ENCODE measurements at regions of chr7 and their contacts with region 1.

Region 1: GRCh38 chr7:37208528-37208927 is 240.1 kb downstream of the ELMO1 start:
- DNase-seq: peak; percentile 53
- ATAC-seq: peak; percentile 92
- H3K4me3 ChIP-seq: no peak overlapping the region
- H3K27ac ChIP-seq: no peak overlapping the region
- H3K4me1 ChIP-seq: no peaks in the 10 kb centered on the region
- H3K27me3 ChIP-seq: 0 out of 5 replicates have a peak, but pooled peaks cover 0 to 2% of the 10 kb centered on the region in 2 experiments
- CTCF ChIP-seq: peak; percentile 77
- EP300 ChIP-seq: no peak
- POLR2A ChIP-seq: no peak
- RAD21 ChIP-seq: peak; percentile 36; the same call in 1 of the 2 replicates

Region 2: GRCh38 chr7:37198041-37198905 is 10.3 kb before region 1 on chr7:
- CTCF ChIA-PET with region 1: no interaction called
- POLR2A ChIA-PET with region 1: no interaction called
- in situ Hi-C with region 1: no loop called
- intact Hi-C with region 1: no loop called
- DNase-seq: peak; percentile 49
- ATAC-seq: peak; percentile 60
- H3K4me3 ChIP-seq: no peak overlapping the region
- H3K27ac ChIP-seq: no peak overlapping the region
- H3K4me1 ChIP-seq: peaks cover 46% of the 10 kb centered on the region
- H3K27me3 ChIP-seq: no peaks in the 10 kb centered on the region
- CTCF ChIP-seq: no peak
- EP300 ChIP-seq: no peak
- POLR2A ChIP-seq: no peak
- RAD21 ChIP-seq: no peak

Region 3: DNA sequence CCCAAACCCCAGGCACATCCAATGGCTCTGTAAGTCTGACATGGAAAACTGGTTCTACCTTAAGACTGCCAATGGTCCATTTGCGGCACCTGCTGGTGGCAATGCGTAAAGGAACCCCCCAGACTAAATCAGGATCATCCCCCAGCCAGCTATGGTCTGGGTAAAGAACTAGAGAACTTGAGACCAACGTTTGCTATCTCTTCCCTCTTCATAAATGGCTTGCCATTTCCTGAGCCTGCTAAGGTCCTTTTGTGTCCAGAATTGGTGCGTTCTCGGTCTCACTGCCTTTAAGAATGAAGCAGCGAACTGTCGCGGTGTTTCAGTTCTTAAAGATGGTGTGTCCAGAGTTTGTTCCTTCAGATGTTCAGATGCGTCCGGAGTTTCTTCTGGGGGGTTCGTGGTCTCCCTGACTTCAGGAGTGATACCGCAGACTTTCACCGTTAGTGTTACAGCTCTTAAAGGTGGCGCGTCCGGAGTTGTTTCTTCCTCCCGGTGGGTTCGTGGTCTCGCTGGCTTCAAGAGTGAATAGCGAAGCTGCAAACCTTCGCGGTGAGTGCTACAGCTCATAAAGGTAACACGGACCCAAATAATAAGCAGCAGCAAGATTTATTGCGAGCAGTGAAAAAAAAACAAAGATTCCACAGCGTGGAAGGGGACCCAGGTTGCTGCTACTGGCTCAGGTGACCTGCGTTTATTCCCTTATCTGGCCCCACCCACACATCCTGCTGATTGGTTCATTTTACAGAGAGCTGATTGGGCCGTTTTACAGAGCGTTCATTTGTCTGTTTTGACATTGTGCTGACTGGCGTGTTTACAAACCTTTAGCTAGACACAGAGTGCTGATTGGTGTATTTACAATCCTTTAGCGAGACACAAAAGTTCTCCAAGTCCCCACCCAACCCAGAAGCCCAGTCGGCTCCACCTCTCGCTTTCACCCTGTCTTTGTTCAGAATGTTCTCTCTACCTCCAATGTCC is 144.7 kb after region 1 on chr7:
- CTCF ChIA-PET with region 1: no interaction called
- POLR2A ChIA-PET with region 1: no interaction called
- in situ Hi-C with region 1: no loop called
- intact Hi-C with region 1: loop called (anchors 2 kb)
- DNase-seq: no peak
- ATAC-seq: peak; percentile 63
- H3K4me3 ChIP-seq: no peak overlapping the region
- H3K27ac ChIP-seq: no peak overlapping the region
- H3K4me1 ChIP-seq: peaks cover 7% of the 10 kb centered on the region; the same call in 1 of the 2 replicates
- H3K27me3 ChIP-seq: no peaks in the 10 kb centered on the region; a peak in 1 of 5 replicates
- CTCF ChIP-seq: peak; percentile 47
- EP300 ChIP-seq: no peak
- POLR2A ChIP-seq: no peak
- RAD21 ChIP-seq: no peak

Region 4: DNA sequence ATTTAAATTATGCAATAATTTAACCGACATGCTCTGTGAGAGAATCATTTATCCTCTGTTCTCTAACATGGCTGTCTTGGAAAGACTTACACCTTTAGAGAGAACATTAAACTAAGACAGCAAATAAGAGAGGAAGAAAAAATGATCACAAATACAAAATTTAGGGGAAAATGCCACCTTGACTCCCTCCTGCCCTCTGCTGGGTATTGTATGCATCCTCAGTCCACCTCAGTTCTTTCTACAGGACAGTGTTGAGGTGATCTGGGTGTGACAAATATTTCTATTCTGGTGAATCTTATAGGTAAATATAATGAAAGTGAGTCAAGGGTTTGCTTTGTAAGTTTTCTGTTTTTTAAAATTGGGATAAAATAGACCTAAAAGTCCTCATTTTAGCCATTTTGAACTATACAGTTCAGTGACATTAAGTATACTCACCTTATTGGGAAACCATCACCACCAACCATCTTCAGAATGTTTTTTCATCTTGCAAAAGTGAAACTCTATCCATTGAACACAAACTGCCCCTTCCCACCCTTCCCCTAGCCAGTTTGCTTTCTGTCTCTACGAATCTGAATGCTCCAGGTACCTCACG is 301.6 kb after region 1 on chr7:
- CTCF ChIA-PET with region 1: no interaction called
- POLR2A ChIA-PET with region 1: no interaction called
- in situ Hi-C with region 1: loop called (anchors 25 kb)
- intact Hi-C with region 1: loop called (anchors 1 kb)
- DNase-seq: peak; percentile 4
- ATAC-seq: peak; percentile 59; the same call in 2 of the 3 replicates
- H3K4me3 ChIP-seq: no peak overlapping the region
- H3K27ac ChIP-seq: no peak overlapping the region
- H3K4me1 ChIP-seq: no peaks in the 10 kb centered on the region
- H3K27me3 ChIP-seq: no peaks in the 10 kb centered on the region; a peak in 1 of 5 replicates
- CTCF ChIP-seq: peak; percentile 57
- EP300 ChIP-seq: no peak
- POLR2A ChIP-seq: no peak
- RAD21 ChIP-seq: no peak

Region 5: GRCh38 chr7:37732253-37732652 is 523.7 kb after region 1 on chr7:
- CTCF ChIA-PET with region 1: no interaction called
- POLR2A ChIA-PET with region 1: no interaction called
- in situ Hi-C with region 1: no loop called
- intact Hi-C with region 1: loop called (anchors 5 kb)
- DNase-seq: peak; percentile 33
- ATAC-seq: peak; percentile 88
- H3K4me3 ChIP-seq: no peak overlapping the region
- H3K27ac ChIP-seq: no peak overlapping the region
- H3K4me1 ChIP-seq: no peaks in the 10 kb centered on the region
- H3K27me3 ChIP-seq: no peaks in the 10 kb centered on the region
- CTCF ChIP-seq: peak; percentile 66
- EP300 ChIP-seq: no peak
- POLR2A ChIP-seq: no peak
- RAD21 ChIP-seq: no peak

Region 6: DNA sequence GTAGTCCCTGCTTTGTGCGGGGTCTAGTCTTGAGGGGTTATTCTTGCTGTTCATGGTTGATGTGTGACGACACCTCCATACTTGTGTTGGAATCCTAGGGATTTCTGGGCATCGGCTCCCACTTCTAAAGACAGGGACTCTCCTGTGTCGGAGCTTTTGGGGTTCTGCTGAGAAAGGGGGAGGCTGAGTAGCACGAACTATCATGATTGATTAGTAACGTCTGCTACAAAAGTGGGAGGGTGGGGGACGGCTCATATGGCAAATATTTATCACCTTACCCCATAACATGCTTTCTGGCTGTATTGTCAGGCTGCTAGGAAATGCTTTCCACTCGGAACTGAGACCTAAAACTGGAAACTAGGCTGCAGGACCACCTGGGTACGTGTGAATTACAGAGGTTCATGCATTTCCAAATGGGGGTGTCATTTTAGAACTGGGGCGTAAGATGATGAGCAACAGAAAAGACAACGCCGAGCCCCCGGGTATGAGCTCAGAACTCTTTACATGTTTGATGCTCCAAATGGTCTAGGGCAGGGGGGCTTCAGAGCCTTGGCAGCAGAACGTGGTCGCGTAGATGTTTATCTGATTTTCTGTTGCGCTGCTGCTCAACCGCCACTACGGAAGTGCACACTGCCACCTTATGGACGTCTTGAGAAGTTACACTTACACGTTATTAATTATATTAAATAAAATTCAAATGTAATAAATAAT is 624.7 kb after region 1 on chr7:
- CTCF ChIA-PET with region 1: no interaction called
- POLR2A ChIA-PET with region 1: no interaction called
- in situ Hi-C with region 1: no loop called
- intact Hi-C with region 1: loop called (anchors 1 kb)
- DNase-seq: peak; percentile 41
- ATAC-seq: no peak; the same call in 2 of the 3 replicates
- H3K4me3 ChIP-seq: peak overlapping the region in 1 of 3 experiments; percentile 40; a peak in 1 of 6 replicates
- H3K27ac ChIP-seq: no peak overlapping the region
- H3K4me1 ChIP-seq: 0 out of 2 replicates have a peak, but pooled peaks cover 4% of the 10 kb centered on the region
- H3K27me3 ChIP-seq: no peaks in the 10 kb centered on the region; a peak in 1 of 5 replicates
- CTCF ChIP-seq: peak; percentile 62
- EP300 ChIP-seq: no peak
- POLR2A ChIP-seq: no peak
- RAD21 ChIP-seq: no peak